WTC11 (cell line): ENCODE measurements at regions of chr11 and their contacts with region 1.

Region 1: DNA sequence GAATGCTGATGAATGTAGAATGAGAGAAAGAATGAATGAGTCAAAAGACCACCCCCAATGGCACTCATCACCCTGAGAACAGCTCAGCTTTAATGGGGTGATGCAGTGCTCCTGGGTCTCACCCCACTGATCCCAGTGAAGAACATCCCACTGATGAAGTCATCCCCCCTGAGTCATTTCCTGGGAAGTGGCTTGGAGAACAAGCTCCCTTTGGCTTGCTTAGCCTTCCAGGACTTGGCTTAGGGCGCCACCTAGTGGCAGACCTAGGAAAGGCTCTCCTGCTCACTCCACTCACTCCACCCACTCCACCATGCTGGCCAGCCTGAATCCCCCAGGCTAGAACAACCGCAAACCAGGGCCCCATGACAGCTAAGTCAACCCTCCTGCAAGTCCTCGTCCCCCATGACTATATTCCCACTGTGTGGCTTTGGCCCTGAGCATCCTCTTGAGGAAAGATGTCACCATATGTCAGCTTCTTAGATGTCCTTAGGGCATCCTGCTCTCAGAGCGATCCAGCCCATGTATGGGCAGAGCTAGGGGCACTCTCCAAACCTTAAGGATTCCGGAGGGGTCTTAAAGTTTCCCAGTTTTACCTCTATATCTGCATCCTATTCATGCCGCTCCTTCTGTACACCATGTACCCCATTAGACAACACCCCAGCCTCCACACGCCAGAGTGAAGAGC is 17.8 kb upstream of the TMPRSS13 start:
- DNase-seq: peak; percentile 94
- ATAC-seq: peak; percentile 97
- H3K4me3 Mint-ChIP-seq: no peak overlapping the region
- H3K27ac Mint-ChIP-seq: 0 out of 2 replicates have a peak overlapping the region, but pooled peaks have one; percentile 28
- H3K4me1 Mint-ChIP-seq: no peaks in the 10 kb centered on the region
- H3K27me3 Mint-ChIP-seq: no peaks in the 10 kb centered on the region
- CTCF ChIP-seq: peak; percentile 96

Region 2: DNA sequence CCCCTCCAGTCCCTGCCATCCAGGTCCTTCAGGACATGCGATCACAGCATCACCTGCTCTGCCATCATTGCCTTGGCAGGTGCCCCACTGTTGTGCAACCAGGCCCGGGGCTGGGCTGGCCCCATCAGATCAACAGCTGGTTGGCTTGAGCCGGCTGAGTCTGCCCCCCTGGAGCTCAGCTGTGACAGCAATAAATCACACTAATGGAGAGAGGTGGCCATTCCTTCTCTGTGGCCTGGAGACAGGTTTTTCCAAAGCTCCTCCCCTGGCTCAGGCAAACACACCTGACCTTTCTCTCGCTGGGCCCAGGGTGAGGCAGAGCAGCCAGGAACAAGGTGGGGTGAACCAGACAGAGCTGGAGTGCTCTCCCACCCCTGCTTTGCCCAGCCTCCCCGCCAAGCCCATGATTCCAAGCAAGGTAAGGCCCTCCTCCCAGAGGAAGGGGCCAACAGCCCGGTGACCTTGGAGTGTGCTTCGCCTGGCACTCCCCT is 113.5 kb before region 1 on chr11:
- CTCF ChIA-PET with region 1: interaction called, 23 read pairs
- POLR2A ChIA-PET with region 1: no interaction called
- DNase-seq: no peak
- ATAC-seq: no peak
- H3K4me3 Mint-ChIP-seq: no peak overlapping the region
- H3K27ac Mint-ChIP-seq: no peak overlapping the region
- H3K4me1 Mint-ChIP-seq: peaks cover 27% of the 10 kb centered on the region
- H3K27me3 Mint-ChIP-seq: peaks cover 2% of the 10 kb centered on the region; the same call in 1 of the 2 replicates
- CTCF ChIP-seq: no peak

Region 3: DNA sequence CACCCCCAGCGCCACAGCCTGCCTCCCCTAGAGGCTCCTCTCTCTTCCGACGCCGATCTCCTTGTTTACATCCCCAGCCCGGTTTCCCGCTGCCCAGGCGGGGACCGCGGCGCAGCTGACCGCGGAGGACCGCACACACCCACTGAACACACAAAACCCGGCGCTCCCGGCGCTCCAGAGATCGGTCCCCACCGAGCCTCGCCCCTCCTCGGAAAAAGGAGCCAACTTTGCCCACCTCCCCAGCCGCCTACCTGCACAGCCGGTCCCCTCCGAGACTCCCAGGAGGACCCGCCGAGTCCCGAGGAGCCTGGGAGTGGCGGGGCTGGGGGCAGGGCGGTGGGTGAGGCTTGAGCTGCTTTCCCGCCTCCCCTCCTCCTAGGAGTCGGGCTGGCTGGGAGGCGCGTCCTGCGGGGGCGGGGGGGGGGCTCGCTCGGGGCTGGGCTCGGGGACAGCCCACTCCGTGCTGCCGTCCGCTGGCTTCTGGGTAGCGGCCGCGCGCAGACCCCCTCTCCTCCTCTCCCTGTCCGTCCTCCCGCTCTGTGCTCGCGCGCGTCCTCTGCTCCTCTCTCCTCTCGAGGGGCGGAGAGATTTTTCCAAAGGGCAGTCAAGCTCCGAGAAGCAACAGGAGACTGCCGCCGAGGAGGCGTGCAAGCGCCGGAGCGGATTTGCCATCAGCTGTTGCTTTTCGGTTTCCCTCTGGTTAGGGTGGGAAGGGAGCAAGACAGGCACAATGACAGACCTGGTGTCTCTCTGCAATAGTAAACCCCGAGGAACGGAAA is 70.5 kb before region 1 on chr11 and contains the start of gene FXYD6:
- CTCF ChIA-PET with region 1: interaction called, 23 read pairs
- POLR2A ChIA-PET with region 1: no interaction called
- DNase-seq: peak; percentile 71
- ATAC-seq: peak; percentile 56
- H3K4me3 Mint-ChIP-seq: peak within 1 kb of the TSS; percentile 95
- H3K27ac Mint-ChIP-seq: no peak within 1 kb of the TSS
- H3K4me1 Mint-ChIP-seq: peaks cover 36% of the 10 kb centered on the region
- H3K27me3 Mint-ChIP-seq: peaks cover 85% of the 10 kb centered on the region
- CTCF ChIP-seq: no peak
- total RNA-seq, gene FXYD6: 26.2 to 31.6 TPM (median 30.1 TPM) in 3 replicates

Region 4: GRCh38 chr11:117932067-117932370 is 15.0 kb before region 1 on chr11:
- CTCF ChIA-PET with region 1: interaction called, 94 read pairs
- POLR2A ChIA-PET with region 1: no interaction called
- DNase-seq: no peak
- ATAC-seq: no peak
- H3K4me3 Mint-ChIP-seq: no peak overlapping the region
- H3K27ac Mint-ChIP-seq: no peak overlapping the region
- H3K4me1 Mint-ChIP-seq: peaks cover 40% of the 10 kb centered on the region
- H3K27me3 Mint-ChIP-seq: peaks cover 4% of the 10 kb centered on the region
- CTCF ChIP-seq: no peak

Region 5: DNA sequence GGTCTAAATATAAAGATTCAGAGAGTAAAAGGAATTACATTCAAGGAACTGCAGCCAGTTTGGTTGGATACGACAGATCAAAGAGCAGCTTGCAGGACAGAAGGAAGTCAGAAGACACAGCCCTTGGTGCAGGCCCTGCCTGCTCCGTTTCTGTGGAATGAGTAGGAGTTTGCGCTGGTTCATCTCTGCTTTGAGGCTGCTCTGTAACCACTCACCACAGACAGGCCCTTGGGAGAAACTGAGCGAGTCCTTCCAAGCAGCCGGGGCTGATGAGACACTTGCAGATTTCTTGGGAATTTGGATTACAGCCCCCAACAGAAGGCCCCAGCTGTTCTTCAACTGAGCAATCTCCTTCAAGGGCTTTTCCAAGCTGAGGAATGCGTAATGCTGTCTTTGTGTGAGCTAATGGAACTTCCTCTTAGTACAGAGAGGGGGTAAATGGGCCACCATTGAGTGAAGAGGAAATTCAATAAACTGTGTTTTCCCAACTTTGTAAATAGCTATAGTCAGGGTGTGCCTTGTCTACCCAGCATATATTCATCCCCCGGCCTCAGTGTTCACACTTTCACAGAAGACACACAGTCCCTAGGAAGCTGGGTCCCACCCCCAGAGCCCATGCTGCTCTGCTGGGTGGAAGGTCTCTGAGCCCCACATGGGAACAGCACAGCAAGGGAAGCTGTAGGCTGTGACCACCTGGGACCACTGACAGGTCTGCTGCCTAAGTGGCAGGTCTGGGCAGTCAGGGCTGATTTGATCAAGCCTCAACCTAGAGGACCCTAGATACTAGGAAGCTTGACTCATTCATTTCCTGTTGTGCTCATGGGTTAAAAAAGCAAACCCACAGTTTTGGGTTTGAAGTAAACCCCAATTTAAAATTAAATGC is 55.8 kb after region 1 on chr11:
- CTCF ChIA-PET with region 1: interaction called, 14 read pairs
- POLR2A ChIA-PET with region 1: no interaction called
- DNase-seq: no peak
- ATAC-seq: peak; percentile 79
- H3K4me3 Mint-ChIP-seq: no peak overlapping the region
- H3K27ac Mint-ChIP-seq: no peak overlapping the region
- H3K4me1 Mint-ChIP-seq: peaks cover 11% of the 10 kb centered on the region
- H3K27me3 Mint-ChIP-seq: peaks cover 3% of the 10 kb centered on the region
- CTCF ChIP-seq: no peak